Activated CD4-positive, alpha-beta T cell treated with anti-CD3 and anti-CD28 coated beads, Interleukin-2, amount 10 ng/mL, durations not matched to agents 24 days and 14 days (primary cell): ENCODE measurements at regions of chr6 and their contacts with region 1.

Region 1: DNA sequence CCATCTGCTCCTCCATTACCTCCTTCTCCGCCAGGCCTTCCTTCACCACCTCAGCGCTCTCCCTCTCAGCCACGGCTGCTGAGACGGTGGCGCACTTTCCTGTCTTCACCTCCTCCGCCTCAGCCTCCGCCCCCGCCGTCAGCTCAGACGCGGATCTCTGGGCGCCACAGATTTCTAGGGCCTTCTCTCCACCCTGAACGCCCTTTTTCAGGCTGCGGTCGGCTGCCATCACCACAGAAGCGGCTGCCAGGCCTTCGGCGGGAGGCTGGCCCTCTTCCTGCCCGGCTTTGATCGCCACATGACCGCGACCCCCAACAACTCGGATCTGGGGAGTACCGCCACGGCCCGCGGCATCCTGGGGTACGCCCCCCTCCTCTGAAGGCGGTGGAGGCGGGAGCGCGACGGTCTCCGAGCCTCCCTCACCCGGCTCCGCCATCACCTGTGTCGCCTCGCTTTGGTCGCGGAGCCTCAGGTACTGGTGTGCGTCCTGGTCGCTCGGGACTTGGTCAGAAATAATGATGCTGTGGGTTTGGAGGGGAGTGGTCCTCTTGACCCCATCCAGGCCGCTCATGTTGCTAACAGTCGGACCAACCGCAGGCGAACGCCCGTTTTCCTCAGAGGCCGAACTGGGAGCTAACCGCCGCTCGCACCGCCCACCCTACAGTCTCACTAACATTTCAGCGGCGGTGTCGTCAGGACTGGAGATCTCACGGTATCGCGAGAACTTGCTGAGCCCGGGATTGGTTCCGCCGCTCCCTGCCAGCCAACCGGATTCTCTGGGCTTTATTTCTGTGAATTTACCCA is at the start of gene TSPYL1:
- DNase-seq: peak; percentile 98
- H3K4me3 Mint-ChIP-seq: peak within 1 kb of the TSS; percentile 99
- H3K27ac Mint-ChIP-seq: peak within 1 kb of the TSS; percentile 98
- H3K4me1 Mint-ChIP-seq: peaks cover 42% of the 10 kb centered on the region
- H3K27me3 Mint-ChIP-seq: peaks cover 5% of the 10 kb centered on the region
- total RNA-seq, gene TSPYL1: 39.1 and 41.2 TPM in 2 replicates

Region 2: GRCh38 chr6:116034327-116034726 is 245.1 kb before region 1 on chr6:
- intact Hi-C with region 1: no loop called
- DNase-seq: no peak
- H3K4me3 Mint-ChIP-seq: no peak overlapping the region
- H3K27ac Mint-ChIP-seq: no peak overlapping the region
- H3K4me1 Mint-ChIP-seq: no peaks in the 10 kb centered on the region
- H3K27me3 Mint-ChIP-seq: peaks cover 4% of the 10 kb centered on the region

Region 3: DNA sequence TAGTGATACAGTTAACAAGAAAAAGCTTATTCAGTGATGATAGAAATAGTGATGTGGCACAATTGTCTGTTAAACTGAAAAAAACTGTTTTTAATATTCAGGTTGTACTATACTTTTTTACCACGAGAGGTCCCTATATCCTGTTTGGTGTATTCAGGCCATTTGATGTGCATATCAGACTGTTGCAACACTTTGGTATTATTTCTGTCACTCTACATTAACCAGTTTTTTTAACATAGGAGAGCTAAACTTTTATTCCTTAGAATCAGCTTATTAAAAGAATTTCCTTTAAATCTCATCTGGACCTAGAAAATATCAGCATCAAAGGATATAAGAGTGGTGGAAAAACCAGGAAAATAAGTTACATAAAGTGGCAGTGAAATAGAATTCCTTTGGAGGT is 62.4 kb before region 1 on chr6:
- intact Hi-C with region 1: loop called (anchors 5 kb)
- DNase-seq: no peak
- H3K4me3 Mint-ChIP-seq: no peak overlapping the region
- H3K27ac Mint-ChIP-seq: no peak overlapping the region
- H3K4me1 Mint-ChIP-seq: no peaks in the 10 kb centered on the region
- H3K27me3 Mint-ChIP-seq: no peaks in the 10 kb centered on the region

Region 4: DNA sequence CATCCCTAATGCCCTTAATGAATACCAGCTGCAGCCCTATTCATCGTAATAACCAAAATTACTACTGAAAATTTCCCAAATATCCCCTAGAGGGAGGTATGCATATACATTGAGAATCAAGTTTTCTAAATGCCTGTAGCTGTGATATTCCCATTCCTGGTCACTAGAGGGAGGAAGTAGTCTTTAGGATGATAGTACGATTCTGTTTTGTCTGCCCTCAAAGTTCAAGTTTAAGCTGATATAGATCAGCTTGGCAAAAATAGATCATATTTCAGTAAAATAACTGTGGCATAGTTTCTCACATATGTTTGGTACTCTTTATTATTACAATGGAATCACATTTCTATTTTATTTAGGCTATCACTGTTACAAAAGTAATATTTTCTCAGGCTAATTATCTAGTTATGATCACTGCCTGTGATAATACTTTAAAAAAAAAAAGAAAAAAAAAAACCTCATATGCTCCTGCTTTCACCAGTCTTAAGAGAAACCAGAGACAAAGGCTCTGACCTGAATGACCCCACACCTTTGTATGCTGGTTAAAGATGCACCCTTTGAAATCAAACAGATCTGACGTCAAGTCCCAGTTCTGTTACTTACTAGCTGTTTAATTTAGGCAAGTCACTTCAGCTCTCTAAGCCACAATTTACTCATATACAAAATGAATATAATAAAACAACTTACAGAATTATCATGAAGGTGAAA is 10.7 kb before region 1 on chr6:
- intact Hi-C with region 1: loop called (anchors 1 kb)
- DNase-seq: no peak
- H3K4me3 Mint-ChIP-seq: no peak overlapping the region
- H3K27ac Mint-ChIP-seq: no peak overlapping the region
- H3K4me1 Mint-ChIP-seq: peaks cover 8% of the 10 kb centered on the region
- H3K27me3 Mint-ChIP-seq: no peaks in the 10 kb centered on the region

Region 5: GRCh38 chr6:116298973-116299372 is 19.5 kb after region 1 on chr6:
- intact Hi-C with region 1: no loop called
- DNase-seq: no peak
- H3K4me3 Mint-ChIP-seq: no peak overlapping the region
- H3K27ac Mint-ChIP-seq: no peak overlapping the region
- H3K4me1 Mint-ChIP-seq: no peaks in the 10 kb centered on the region
- H3K27me3 Mint-ChIP-seq: peaks cover 17% of the 10 kb centered on the region

Region 6: DNA sequence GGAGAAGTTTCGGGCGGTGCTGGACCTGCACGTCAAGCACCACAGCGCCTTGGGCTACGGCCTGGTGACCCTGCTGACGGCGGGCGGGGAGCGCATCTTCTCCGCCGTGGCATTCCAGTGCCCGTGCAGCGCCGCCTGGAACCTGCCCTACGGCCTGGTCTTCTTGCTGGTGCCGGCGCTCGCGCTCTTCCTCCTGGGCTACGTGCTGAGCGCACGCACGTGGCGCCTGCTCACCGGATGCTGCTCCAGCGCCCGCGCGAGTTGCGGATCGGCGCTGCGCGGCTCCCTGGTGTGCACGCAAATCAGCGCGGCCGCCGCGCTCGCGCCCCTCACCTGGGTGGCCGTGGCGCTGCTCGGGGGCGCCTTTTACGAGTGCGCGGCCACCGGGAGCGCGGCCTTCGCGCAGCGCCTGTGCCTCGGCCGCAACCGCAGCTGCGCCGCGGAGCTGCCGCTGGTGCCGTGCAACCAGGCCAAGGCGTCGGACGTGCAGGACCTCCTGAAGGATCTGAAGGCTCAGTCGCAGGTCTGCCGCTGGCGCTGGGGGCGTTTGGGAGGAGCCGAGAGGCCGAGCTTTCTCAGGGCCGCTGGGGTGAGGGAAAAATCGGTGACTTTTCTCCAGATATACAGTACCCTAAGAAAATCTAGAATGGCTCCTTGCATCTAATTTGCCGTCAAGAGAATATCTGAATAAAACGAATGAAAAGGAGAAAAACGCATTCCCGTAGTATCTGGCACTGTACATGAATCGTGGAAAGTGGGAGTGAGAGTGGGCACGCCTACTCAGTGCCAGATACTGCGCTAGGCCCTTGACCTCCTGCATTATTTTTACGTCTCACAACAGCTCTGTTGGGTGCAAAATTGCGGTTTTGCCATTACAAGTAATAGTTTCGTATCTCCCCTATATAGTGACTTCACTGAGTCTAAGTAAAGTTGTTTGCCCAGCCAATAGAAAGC is 182.7 kb after region 1 on chr6:
- intact Hi-C with region 1: loop called (anchors 5 kb)
- DNase-seq: peak; percentile 91
- H3K4me3 Mint-ChIP-seq: peak overlapping the region; percentile 75
- H3K27ac Mint-ChIP-seq: peak overlapping the region; percentile 85
- H3K4me1 Mint-ChIP-seq: peaks cover 76% of the 10 kb centered on the region
- H3K27me3 Mint-ChIP-seq: no peaks in the 10 kb centered on the region